ENCODE measurements at regions of chr1 and their contacts with region 1.

Region 1: GRCh38 chr1:180343931-180344769 is 114.1 kb downstream of the LHX4 start:
- DNase-seq: no peak
- ATAC-seq: no peak
- H3K4me3 ChIP-seq: no peak overlapping the region
- H3K27ac ChIP-seq: no peak overlapping the region
- H3K4me1 ChIP-seq: peaks cover 3% of the 10 kb centered on the region; the same call in 1 of the 2 replicates
- H3K27me3 ChIP-seq: no peaks in the 10 kb centered on the region
- CTCF ChIP-seq: no peak

Region 2: DNA sequence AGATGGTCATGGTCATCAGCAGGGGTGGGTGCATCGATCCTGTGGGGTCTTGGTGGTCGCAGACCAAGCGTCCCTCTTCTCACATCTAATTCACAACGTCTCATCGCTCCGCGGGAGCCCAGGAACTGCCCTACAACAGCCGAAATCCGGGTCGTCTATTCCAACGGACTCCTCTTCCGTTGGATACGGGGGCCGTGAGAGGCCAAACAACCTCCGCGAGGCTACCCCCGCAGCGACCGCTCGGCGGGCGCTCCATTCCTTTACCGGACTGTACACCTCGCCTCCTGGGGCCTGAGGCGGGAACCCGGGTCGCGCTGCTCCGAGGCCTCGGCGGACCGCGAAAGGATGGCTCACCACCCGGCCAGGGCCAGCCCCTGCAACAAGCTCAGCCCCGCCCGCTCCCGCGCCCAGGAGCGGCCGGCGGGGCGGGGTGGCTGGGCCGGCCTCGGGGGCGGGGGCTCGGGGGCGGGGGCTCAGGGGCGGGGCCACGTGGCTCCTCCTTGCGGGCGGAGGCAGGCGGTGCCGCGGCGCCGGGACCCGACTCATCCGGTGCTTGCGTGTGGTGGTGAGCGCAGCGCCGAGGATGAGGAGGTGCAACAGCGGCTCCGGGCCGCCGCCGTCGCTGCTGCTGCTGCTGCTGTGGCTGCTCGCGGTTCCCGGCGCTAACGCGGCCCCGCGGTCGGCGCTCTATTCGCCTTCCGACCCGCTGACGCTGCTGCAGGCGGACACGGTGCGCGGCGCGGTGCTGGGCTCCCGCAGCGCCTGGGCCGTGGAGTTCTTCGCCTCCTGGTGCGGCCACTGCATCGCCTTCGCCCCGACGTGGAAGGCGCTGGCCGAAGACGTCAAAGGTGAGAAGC is 189.6 kb before region 1 on chr1 and contains the start of gene QSOX1:
- CTCF ChIA-PET with region 1: no interaction called
- POLR2A ChIA-PET with region 1: no interaction called
- in situ Hi-C with region 1: no loop called
- intact Hi-C with region 1: no loop called
- DNase-seq: no peak
- ATAC-seq: peak; percentile 91
- H3K4me3 ChIP-seq: peak within 1 kb of the TSS; percentile 85 to 94
- H3K27ac ChIP-seq: peak within 1 kb of the TSS; percentile 98
- H3K4me1 ChIP-seq: peaks cover 36% of the 10 kb centered on the region
- H3K27me3 ChIP-seq: no peaks in the 10 kb centered on the region
- CTCF ChIP-seq: no peak
- total RNA-seq, gene QSOX1: 152 TPM

Region 3: GRCh38 chr1:180358649-180359048 is 14.5 kb after region 1 on chr1:
- CTCF ChIA-PET with region 1: no interaction called
- POLR2A ChIA-PET with region 1: interaction called, 18 read pairs
- in situ Hi-C with region 1: no loop called
- intact Hi-C with region 1: no loop called
- DNase-seq: no peak
- ATAC-seq: no peak
- H3K4me3 ChIP-seq: no peak overlapping the region
- H3K27ac ChIP-seq: no peak overlapping the region
- H3K4me1 ChIP-seq: no peaks in the 10 kb centered on the region; the same call in 1 of the 2 replicates
- H3K27me3 ChIP-seq: no peaks in the 10 kb centered on the region
- CTCF ChIP-seq: no peak